CD4-positive, alpha-beta memory T cell (primary cell): ENCODE measurements at regions of chr12 and their contacts with region 1.

Region 1: GRCh38 chr12:54958048-54958658 is 26.4 kb downstream of the TESPA1 start:
- DNase-seq: peak; percentile 55 to 68 (median 61)
- H3K4me3 ChIP-seq: no peak overlapping the region
- H3K4me3 Mint-ChIP-seq: peak overlapping the region in 5 of 8 donors; percentile 2 to 65 (median 18)
- H3K27ac ChIP-seq: no peak overlapping the region
- H3K27ac Mint-ChIP-seq: peak overlapping the region; percentile 37 to 84 (median 74)
- H3K4me1 ChIP-seq: peaks cover 85% of the 10 kb centered on the region
- H3K4me1 Mint-ChIP-seq: peaks cover 71 to 94% (median 84%) of the 10 kb centered on the region in 4 donors
- H3K27me3 ChIP-seq: no peaks in the 10 kb centered on the region
- H3K27me3 Mint-ChIP-seq: no peaks in the 10 kb centered on the region

Region 2: DNA sequence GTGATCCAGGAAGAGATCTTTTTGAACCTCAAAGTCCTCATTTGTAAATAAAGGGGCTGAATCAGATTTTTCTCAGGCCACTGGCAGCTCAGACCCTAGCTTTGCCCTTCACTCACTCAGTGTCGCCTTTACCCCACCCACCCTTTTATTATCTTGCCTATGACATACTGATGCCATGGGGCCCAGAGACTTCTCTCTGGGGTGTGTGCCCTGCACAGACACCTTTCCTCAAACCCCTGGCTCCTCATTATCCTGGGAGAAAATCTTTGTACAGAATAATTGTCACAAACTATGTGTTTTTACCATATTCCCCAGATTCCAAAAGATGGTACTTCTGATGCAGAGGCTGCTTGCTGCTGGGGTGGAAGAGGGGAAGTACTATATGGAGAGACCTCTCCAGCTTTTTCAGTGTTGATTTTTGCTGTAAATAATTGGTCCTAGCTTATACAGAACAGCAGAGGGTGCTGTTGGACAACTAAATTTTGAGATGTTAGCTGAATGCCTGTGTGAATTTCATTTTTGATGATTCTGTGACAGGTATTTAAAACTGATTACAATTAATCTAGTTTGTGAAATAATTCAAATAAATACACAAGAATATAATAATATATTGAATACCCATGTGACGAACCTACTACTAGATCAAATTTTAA is 256.1 kb before region 1 on chr12:
- CTCF ChIA-PET with region 1: interaction called, 11 read pairs
- POLR2A ChIA-PET with region 1: no interaction called
- intact Hi-C with region 1: loop called (anchors 1 kb)
- DNase-seq: peak in 4 of 5 donors; percentile 48 to 55 (median 54)
- H3K4me3 ChIP-seq: no peak overlapping the region
- H3K4me3 Mint-ChIP-seq: no peak overlapping the region
- H3K27ac ChIP-seq: no peak overlapping the region
- H3K27ac Mint-ChIP-seq: no peak overlapping the region
- H3K4me1 ChIP-seq: no peaks in the 10 kb centered on the region
- H3K4me1 Mint-ChIP-seq: no peaks in the 10 kb centered on the region
- H3K27me3 ChIP-seq: no peaks in the 10 kb centered on the region
- H3K27me3 Mint-ChIP-seq: peaks cover 5 to 6% of the 10 kb centered on the region in 2 donors

Region 3: DNA sequence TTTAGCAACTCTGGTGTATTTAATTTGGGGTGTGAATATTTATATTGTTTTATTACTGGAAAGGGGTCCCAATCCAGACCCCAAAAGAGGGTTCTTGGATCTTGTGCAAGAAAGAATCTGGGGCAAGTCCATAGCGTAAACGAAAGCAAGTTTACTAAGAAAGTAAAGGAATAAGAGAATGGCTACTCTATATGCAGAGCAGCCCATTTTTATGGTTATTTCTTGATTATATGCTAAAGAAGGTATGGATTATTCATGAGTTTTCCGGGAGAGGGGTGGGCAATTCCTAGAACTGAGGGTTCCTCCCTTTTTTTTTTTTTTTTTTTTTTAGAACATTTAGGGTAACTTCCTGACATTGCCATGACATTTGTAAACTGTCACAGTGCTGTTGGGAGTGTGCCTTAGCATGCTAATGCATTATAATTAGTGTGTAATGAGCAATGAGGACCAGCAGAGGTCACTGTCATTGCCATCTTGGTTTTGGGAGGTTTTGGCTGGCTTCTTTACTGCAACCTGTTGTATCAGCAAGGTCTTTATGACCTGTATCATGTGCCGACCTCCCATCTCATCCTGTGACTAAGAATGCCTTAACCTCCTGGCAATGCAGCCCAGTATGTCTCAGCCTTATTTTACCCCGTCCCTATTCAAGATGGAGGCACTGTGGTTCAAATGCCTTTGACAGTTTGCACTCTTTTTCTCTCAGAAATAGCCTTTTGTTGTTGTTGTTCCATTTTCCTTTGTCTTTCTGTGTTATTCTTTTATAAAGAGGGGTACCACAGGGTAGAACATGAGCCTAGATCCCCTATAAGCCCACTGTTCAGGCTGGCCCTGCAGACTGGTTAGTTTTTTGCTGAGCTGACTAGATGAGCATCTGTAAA is 234.5 kb before region 1 on chr12:
- CTCF ChIA-PET with region 1: interaction called, 7 read pairs
- POLR2A ChIA-PET with region 1: no interaction called
- intact Hi-C with region 1: loop called (anchors 2 kb)
- DNase-seq: peak; percentile 38 to 54 (median 44)
- H3K4me3 ChIP-seq: no peak overlapping the region
- H3K4me3 Mint-ChIP-seq: no peak overlapping the region
- H3K27ac ChIP-seq: no peak overlapping the region
- H3K27ac Mint-ChIP-seq: no peak overlapping the region
- H3K4me1 ChIP-seq: peaks cover 4% of the 10 kb centered on the region
- H3K4me1 Mint-ChIP-seq: peaks cover 5 to 32% (median 12%) of the 10 kb centered on the region in 4 donors
- H3K27me3 ChIP-seq: no peaks in the 10 kb centered on the region
- H3K27me3 Mint-ChIP-seq: peaks cover 7 to 10% of the 10 kb centered on the region in 2 donors

Region 4: GRCh38 chr12:54853995-54854566 is 104.1 kb before region 1 on chr12 and contains the start of gene MUCL1:
- CTCF ChIA-PET with region 1: interaction called, 87 read pairs
- POLR2A ChIA-PET with region 1: interaction called, 5 read pairs
- intact Hi-C with region 1: loop called (anchors 1 kb)
- DNase-seq: peak; percentile 67 to 74 (median 69)
- H3K4me3 ChIP-seq: no peak within 1 kb of the TSS
- H3K4me3 Mint-ChIP-seq: no peak within 1 kb of the TSS
- H3K27ac ChIP-seq: no peak within 1 kb of the TSS
- H3K27ac Mint-ChIP-seq: peak within 1 kb of the TSS in 1 of 7 donors; percentile 55
- H3K4me1 ChIP-seq: no peaks in the 10 kb centered on the region
- H3K4me1 Mint-ChIP-seq: no peaks in the 10 kb centered on the region
- H3K27me3 ChIP-seq: no peaks in the 10 kb centered on the region
- H3K27me3 Mint-ChIP-seq: no peaks in the 10 kb centered on the region
- total RNA-seq, gene MUCL1: not detected

Region 5: GRCh38 chr12:54935235-54935951 is 22.8 kb before region 1 on chr12:
- CTCF ChIA-PET with region 1: interaction called, 21 read pairs
- POLR2A ChIA-PET with region 1: interaction called, 13 read pairs
- intact Hi-C with region 1: loop called (anchors 1 kb)
- DNase-seq: peak; percentile 53 to 71 (median 60)
- H3K4me3 ChIP-seq: no peak overlapping the region
- H3K4me3 Mint-ChIP-seq: peak overlapping the region in 7 of 8 donors; percentile 42 to 85 (median 74)
- H3K27ac ChIP-seq: peak overlapping the region; percentile 35
- H3K27ac Mint-ChIP-seq: peak overlapping the region; percentile 80 to 96 (median 91)
- H3K4me1 ChIP-seq: peaks cover 45% of the 10 kb centered on the region
- H3K4me1 Mint-ChIP-seq: peaks cover 33 to 53% (median 44%) of the 10 kb centered on the region in 4 donors
- H3K27me3 ChIP-seq: no peaks in the 10 kb centered on the region
- H3K27me3 Mint-ChIP-seq: no peaks in the 10 kb centered on the region

Region 6: DNA sequence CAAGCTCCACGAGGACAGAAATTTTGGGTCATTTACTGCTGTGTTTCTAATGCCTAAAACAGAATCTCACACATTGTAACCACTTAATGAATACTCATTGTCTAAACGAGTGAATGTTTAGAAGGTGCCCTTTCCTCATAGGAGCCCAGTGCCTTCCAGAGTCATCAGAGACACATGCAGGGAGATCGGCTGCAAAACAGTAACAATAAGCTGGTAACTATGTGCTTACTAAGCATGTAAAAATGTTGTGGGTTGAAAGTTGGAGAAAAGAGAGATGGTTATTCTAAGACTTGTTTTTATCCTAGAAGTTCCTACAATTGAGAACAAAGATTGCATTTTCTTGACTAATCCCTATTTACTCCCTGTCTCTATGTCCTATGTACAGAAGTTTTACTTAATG is 19.0 kb after region 1 on chr12:
- CTCF ChIA-PET with region 1: interaction called, 51 read pairs
- POLR2A ChIA-PET with region 1: interaction called, 141 read pairs
- intact Hi-C with region 1: no loop called
- DNase-seq: no peak
- H3K4me3 ChIP-seq: peak overlapping the region; percentile 16 to 22
- H3K4me3 Mint-ChIP-seq: peak overlapping the region; percentile 81 to 99 (median 93)
- H3K27ac ChIP-seq: peak overlapping the region; percentile 38
- H3K27ac Mint-ChIP-seq: peak overlapping the region; percentile 84 to 99 (median 94)
- H3K4me1 ChIP-seq: peaks cover 98% of the 10 kb centered on the region
- H3K4me1 Mint-ChIP-seq: peaks cover 77 to 98% (median 90%) of the 10 kb centered on the region in 4 donors
- H3K27me3 ChIP-seq: no peaks in the 10 kb centered on the region
- H3K27me3 Mint-ChIP-seq: no peaks in the 10 kb centered on the region

Region 7: DNA sequence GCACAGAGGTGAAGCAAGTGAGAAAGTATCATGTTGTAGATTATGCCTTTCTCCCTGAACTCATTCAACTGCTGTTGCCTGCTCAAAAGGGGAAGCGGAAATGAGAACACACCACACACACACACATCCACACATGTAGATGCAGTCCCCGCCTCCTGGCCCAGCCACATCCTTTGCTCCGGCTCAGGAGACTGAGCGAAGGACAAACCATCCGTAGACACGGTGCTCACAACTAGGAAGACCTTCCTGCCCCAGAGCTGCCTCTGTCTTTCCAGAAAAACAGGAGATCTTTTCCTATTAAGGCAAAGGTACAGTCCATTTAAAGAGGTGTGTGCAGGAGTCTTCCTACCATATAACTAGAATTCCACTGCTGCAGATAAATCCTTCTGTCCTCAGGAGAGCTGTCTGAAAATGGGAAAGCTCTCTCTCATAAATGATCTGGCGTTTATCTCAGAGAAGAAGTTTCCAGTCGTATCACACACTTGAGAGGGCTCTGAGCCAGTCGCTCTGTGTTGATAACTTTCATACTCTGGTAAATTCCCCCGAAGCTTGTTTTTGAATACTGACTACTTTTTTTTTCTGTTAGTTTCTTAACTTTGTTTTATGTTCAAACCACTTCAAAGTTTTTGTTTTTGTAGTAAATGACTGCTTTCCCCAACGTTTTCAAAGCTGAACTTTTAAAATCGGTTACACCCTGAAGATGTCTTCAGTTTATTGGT is 26.7 kb after region 1 on chr12 and contains the start of gene TESPA1:
- CTCF ChIA-PET with region 1: interaction called, 51 read pairs
- POLR2A ChIA-PET with region 1: interaction called, 141 read pairs
- intact Hi-C with region 1: no loop called
- DNase-seq: peak; percentile 86 to 94 (median 90)
- H3K4me3 ChIP-seq: peak within 1 kb of the TSS; percentile 66 to 86
- H3K4me3 Mint-ChIP-seq: peak within 1 kb of the TSS; percentile 89 to 99 (median 95)
- H3K27ac ChIP-seq: peak within 1 kb of the TSS; percentile 92
- H3K27ac Mint-ChIP-seq: peak within 1 kb of the TSS; percentile 97 to 100 (median 98)
- H3K4me1 ChIP-seq: peaks cover 71% of the 10 kb centered on the region
- H3K4me1 Mint-ChIP-seq: peaks cover 53 to 97% (median 64%) of the 10 kb centered on the region in 4 donors
- H3K27me3 ChIP-seq: no peaks in the 10 kb centered on the region
- H3K27me3 Mint-ChIP-seq: no peaks in the 10 kb centered on the region
- total RNA-seq, gene TESPA1: 269 to 287 TPM